ENCODE measurements at regions of chr13 and their contacts with region 1.

Region 1: GRCh38 chr13:77492982-77493381 is 42.5 kb upstream of the SCEL start:
- DNase-seq: peak; percentile 96
- H3K4me3 ChIP-seq: no peak overlapping the region
- H3K27ac ChIP-seq: no peak overlapping the region
- H3K4me1 ChIP-seq: peaks cover 9% of the 10 kb centered on the region
- H3K27me3 ChIP-seq: peaks cover 2 to 12% of the 10 kb centered on the region in 2 experiments
- CTCF ChIP-seq: peak; percentile 44 to 60
- POLR2A ChIP-seq: peak; percentile 35

Region 2: DNA sequence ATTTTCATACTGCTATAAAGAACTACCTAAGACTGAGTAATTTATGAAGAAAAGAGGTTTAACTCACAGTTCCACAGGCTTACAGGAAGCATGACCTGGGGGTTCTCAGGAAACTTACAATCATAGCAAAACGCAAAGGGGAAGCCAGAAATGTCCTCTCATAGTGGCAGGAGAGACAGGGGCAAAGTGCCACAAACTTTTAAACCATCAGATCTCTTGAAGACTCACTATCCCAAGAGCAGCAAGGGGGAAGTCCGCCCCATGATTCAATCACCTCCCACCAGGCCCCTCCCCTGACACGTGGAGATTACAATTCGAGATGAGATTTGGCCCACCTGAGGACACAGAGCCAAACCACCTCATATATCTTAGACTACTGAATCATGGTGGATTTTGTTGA is 805.5 kb before region 1 on chr13:
- CTCF ChIA-PET with region 1: no interaction called
- POLR2A ChIA-PET with region 1: no interaction called
- dilution Hi-C with region 1: no loop called
- intact Hi-C with region 1: no loop called
- DNase-seq: no peak
- H3K4me3 ChIP-seq: no peak overlapping the region
- H3K27ac ChIP-seq: no peak overlapping the region
- H3K4me1 ChIP-seq: no peaks in the 10 kb centered on the region
- H3K27me3 ChIP-seq: no peaks in the 10 kb centered on the region
- CTCF ChIP-seq: no peak
- POLR2A ChIP-seq: no peak

Region 3: GRCh38 chr13:77516342-77516789 is 23.4 kb after region 1 on chr13:
- CTCF ChIA-PET with region 1: interaction called, 18 read pairs
- POLR2A ChIA-PET with region 1: interaction called, 3 read pairs
- dilution Hi-C with region 1: no loop called
- intact Hi-C with region 1: no loop called
- DNase-seq: peak; percentile 70
- H3K4me3 ChIP-seq: no peak overlapping the region
- H3K27ac ChIP-seq: peak overlapping the region; percentile 49
- H3K4me1 ChIP-seq: peaks cover 37% of the 10 kb centered on the region
- H3K27me3 ChIP-seq: no peaks in the 10 kb centered on the region
- CTCF ChIP-seq: no peak
- POLR2A ChIP-seq: no peak

Region 4: DNA sequence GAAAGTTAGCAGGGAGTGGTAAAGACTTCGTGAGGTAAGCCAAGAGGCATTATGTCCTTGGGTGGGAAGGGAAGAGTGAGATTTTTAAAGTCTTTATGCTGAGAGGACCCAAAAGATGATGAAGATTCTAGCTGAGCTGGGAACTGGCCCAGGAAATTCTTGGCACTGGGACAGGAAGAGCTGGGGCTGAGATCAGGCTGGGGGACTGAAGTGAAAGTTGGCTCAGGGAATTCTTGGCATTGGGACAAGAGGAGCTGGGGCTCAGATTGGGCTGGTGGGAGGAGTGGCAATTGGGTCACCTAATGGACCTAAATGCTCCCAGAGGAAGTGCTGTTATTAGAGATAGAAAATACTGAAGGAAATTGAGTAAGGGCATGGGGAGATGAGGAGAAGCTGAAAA is 51.4 kb after region 1 on chr13:
- CTCF ChIA-PET with region 1: interaction called, 21 read pairs
- POLR2A ChIA-PET with region 1: interaction called, 3 read pairs
- dilution Hi-C with region 1: no loop called
- intact Hi-C with region 1: no loop called
- DNase-seq: peak; percentile 71
- H3K4me3 ChIP-seq: no peak overlapping the region
- H3K27ac ChIP-seq: no peak overlapping the region
- H3K4me1 ChIP-seq: peaks cover 8% of the 10 kb centered on the region
- H3K27me3 ChIP-seq: peaks cover 0 to 2% of the 10 kb centered on the region in 2 experiments
- CTCF ChIP-seq: no peak
- POLR2A ChIP-seq: no peak

Region 5: DNA sequence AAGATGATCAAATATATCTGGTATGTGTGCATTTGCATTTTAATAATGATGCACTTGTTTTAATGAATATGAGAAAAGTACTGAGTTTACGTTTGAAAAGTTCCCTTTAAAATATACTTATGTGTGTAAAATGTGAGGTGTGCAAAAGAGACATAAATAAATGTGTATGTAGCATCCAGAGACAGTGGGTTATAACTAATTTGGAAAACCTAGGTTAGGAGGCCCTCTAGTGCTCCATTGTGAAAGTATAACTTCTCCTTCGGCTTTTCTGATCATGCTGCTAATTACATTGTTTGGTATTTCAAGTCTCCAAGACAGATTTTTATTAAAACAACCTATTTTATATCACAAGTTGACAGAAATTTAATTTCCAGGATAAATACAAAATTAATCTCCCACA is 72.7 kb after region 1 on chr13:
- CTCF ChIA-PET with region 1: interaction called, 103 read pairs
- POLR2A ChIA-PET with region 1: interaction called, 8 read pairs
- dilution Hi-C with region 1: no loop called
- intact Hi-C with region 1: loop called (anchors 1 kb)
- DNase-seq: peak; percentile 71
- H3K4me3 ChIP-seq: no peak overlapping the region
- H3K27ac ChIP-seq: no peak overlapping the region
- H3K4me1 ChIP-seq: no peaks in the 10 kb centered on the region
- H3K27me3 ChIP-seq: peaks cover 5 to 8% of the 10 kb centered on the region in 2 experiments
- CTCF ChIP-seq: peak; percentile 28 to 33
- POLR2A ChIP-seq: no peak

Region 6: DNA sequence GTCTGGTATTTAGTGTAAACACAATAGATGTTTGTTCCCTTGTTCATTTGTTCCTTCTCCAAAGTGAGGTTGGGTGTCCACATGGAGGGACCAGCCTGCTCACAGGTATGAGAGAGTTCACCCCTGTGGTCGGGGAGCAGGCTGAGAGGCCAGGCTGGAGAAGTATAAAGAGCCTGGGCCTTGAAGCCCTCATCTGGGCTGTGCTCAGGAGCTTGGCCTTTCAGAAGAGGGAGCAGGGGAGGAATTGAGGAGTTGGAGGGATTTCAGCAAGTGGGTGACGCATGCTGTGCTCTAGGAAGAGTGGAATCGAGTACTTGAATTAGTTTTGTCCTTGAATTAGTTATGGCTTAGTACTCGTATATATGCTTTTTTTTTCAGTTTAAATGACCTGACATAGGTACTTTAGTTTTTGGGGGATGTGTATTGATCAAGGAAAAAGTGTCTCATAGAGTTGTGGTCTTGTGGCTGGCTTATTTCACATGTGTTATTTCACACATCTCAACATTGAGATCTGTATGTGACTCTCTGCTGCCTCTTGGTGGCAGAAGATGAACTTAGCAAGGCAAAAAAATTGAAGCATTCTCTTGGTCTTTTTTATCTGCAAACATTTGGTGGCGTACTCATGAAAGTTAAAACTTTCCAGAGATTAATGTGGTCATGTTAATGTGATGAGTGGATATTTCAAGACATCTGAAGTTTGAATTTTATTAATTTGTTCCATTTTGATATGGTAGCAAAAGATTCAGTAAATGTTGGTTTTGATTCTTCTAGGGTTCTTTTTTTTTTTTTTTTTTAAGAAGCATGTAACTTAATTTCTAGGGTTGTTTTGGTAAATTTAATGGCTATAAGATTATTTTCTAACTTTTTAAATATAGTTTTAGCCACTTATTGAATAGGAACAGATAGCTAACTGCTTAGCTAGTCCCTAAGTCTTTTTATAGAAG is 258.8 kb after region 1 on chr13:
- CTCF ChIA-PET with region 1: interaction called, 11 read pairs
- POLR2A ChIA-PET with region 1: no interaction called
- dilution Hi-C with region 1: no loop called
- intact Hi-C with region 1: loop called (anchors 1 kb)
- DNase-seq: peak; percentile 76
- H3K4me3 ChIP-seq: no peak overlapping the region
- H3K27ac ChIP-seq: no peak overlapping the region
- H3K4me1 ChIP-seq: peaks cover 3% of the 10 kb centered on the region
- H3K27me3 ChIP-seq: no peaks in the 10 kb centered on the region
- CTCF ChIP-seq: peak; percentile 59 to 65
- POLR2A ChIP-seq: no peak

Region 7: DNA sequence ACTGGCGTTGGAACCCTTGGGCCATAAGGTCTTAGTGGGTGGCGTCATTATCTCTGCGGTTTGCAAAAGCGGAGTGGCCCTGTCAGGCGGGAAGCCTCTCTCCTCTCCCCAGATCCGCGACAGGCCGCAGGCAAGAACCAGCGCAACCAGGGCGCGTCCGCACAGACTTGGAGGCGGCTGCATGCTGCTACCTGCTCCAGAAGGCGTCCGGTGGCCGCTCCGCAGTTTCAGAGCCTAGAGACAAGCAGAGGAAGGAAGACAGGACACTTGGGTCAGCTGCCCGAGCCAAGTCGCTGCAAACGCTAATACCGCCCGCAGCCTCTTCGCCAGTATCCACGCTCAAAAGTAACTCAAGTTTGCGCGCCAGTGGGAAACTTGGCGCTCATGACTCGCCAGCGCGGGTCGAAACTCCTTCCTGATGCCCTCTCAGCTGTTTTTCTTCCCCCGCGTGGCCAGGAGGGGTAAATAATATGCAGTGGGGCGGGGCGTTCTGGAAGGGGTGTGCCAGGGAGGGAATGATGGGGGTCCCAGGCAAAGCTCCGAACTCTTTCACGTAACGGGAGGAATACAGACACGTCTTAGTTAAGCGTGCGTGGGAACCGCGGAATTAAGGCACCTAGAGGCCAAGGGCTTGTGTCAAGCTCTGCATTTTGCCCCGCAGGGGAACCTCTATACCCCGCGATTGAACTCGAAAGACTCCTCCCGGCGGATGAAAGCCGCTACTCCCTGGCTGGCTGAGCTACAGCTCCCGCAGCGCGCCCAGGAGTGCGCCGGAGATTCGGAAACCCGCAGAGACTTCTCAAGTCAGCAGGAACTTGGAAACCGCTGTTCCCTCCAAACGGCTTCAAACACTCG is 425.6 kb after region 1 on chr13 and contains the start of gene EDNRB:
- CTCF ChIA-PET with region 1: no interaction called
- POLR2A ChIA-PET with region 1: no interaction called
- dilution Hi-C with region 1: no loop called
- intact Hi-C with region 1: no loop called
- DNase-seq: peak; percentile 66
- H3K4me3 ChIP-seq: peak within 1 kb of the TSS; percentile 67 to 71 (median 67)
- H3K27ac ChIP-seq: no peak within 1 kb of the TSS
- H3K4me1 ChIP-seq: peaks cover 10% of the 10 kb centered on the region
- H3K27me3 ChIP-seq: no peaks in the 10 kb centered on the region
- CTCF ChIP-seq: peak; percentile 5 to 30
- POLR2A ChIP-seq: no peak
- total RNA-seq, gene EDNRB: 2.3 and 2.6 TPM in 2 replicates